Activated CD8-positive, alpha-beta T cell treated with anti-CD3 and anti-CD28 coated beads, Interleukin-2, amount 10 ng/mL, durations not matched to agents 7 days and 5 days (primary cell): ENCODE measurements at regions of chr2 and their contacts with region 1.

Region 1: DNA sequence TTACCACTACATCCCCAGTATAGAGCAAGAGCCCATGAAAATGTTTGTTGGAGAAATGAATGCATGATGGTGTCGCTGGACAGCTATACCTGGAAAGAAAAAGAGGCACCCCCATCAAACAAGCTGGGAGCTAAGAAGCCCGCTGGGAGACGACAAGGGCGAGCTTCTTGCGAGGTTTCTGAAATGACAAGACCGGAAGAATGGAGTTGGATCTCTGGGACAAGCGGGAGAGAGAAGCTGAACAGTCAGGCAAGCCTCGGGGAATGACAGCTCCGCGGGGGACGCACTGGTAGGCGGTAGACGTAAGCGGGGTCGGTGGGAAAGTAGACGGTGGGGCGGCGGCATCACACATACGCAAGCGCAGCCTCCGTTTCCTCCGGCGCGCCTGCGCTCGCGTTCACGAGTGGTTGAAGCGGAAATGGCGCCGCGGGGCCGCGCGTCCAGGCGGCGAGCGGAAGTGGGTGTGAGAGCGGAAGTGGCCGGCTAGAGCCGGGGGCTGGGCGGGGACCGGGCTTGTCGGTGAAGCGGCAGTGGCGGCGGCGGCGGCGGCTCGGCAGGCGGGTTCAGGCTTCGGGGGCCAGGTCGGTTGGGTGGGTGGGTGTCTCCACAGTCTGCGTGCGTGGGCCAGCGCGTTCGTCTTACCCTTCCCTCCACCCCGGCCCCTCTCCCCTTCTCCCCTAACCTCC is at the start of gene ARPC2:
- DNase-seq: peak; percentile 97
- ATAC-seq: peak; percentile 72
- H3K4me3 Mint-ChIP-seq: peak within 1 kb of the TSS; percentile 94
- H3K27ac Mint-ChIP-seq: peak within 1 kb of the TSS; percentile 93
- H3K4me1 Mint-ChIP-seq: peaks cover 36% of the 10 kb centered on the region
- H3K27me3 Mint-ChIP-seq: no peaks in the 10 kb centered on the region
- total RNA-seq, gene ARPC2: 821 to 844 TPM

Region 2: GRCh38 chr2:217964275-217965161 is 252.3 kb before region 1 on chr2:
- CTCF ChIA-PET with region 1: no interaction called
- POLR2A ChIA-PET with region 1: no interaction called
- DNase-seq: no peak
- ATAC-seq: no peak
- H3K4me3 Mint-ChIP-seq: no peak overlapping the region
- H3K27ac Mint-ChIP-seq: no peak overlapping the region
- H3K4me1 Mint-ChIP-seq: no peaks in the 10 kb centered on the region
- H3K27me3 Mint-ChIP-seq: peaks cover 15% of the 10 kb centered on the region

Region 3: GRCh38 chr2:218168635-218169462 is 48.0 kb before region 1 on chr2:
- CTCF ChIA-PET with region 1: interaction called, 12 read pairs
- POLR2A ChIA-PET with region 1: interaction called, 3 read pairs
- DNase-seq: peak; percentile 84
- ATAC-seq: peak; percentile 75
- H3K4me3 Mint-ChIP-seq: no peak overlapping the region
- H3K27ac Mint-ChIP-seq: no peak overlapping the region
- H3K4me1 Mint-ChIP-seq: peaks cover 28% of the 10 kb centered on the region
- H3K27me3 Mint-ChIP-seq: peaks cover 24% of the 10 kb centered on the region

Region 4: DNA sequence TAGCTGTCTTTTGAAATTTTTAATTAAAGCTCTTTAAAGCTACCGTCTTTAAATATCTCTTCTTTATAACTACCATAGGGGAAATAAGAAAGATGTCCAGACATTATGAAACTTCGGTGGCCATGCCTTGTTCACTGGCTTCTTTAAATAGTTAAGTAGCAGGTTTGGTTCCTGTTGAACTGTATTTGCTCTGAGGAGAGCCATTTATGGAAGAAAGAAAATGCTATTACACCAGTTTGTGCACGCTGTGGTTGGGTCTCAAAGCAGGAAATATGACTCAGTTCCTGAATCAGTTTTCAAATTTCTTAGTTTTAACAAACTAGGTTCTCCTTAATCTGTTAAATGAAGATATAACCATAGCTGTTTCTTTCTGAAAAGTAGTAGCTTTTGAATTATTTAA is 12.4 kb after region 1 on chr2:
- CTCF ChIA-PET with region 1: interaction called, 97 read pairs
- POLR2A ChIA-PET with region 1: interaction called, 59 read pairs
- DNase-seq: peak; percentile 77
- ATAC-seq: peak; percentile 83
- H3K4me3 Mint-ChIP-seq: peak overlapping the region; percentile 58
- H3K27ac Mint-ChIP-seq: peak overlapping the region; percentile 88
- H3K4me1 Mint-ChIP-seq: peaks cover 80% of the 10 kb centered on the region
- H3K27me3 Mint-ChIP-seq: no peaks in the 10 kb centered on the region

Region 5: GRCh38 chr2:218322895-218323808 is 106.3 kb after region 1 on chr2:
- CTCF ChIA-PET with region 1: no interaction called
- POLR2A ChIA-PET with region 1: no interaction called
- DNase-seq: peak; percentile 38
- ATAC-seq: peak; percentile 82
- H3K4me3 Mint-ChIP-seq: peak overlapping the region; percentile 70
- H3K27ac Mint-ChIP-seq: peak overlapping the region; percentile 3
- H3K4me1 Mint-ChIP-seq: peaks cover 23% of the 10 kb centered on the region
- H3K27me3 Mint-ChIP-seq: peaks cover 14% of the 10 kb centered on the region